CD4-positive, alpha-beta memory T cell (primary cell): ENCODE measurements at regions of chr16 and their contacts with region 1.

Region 1: DNA sequence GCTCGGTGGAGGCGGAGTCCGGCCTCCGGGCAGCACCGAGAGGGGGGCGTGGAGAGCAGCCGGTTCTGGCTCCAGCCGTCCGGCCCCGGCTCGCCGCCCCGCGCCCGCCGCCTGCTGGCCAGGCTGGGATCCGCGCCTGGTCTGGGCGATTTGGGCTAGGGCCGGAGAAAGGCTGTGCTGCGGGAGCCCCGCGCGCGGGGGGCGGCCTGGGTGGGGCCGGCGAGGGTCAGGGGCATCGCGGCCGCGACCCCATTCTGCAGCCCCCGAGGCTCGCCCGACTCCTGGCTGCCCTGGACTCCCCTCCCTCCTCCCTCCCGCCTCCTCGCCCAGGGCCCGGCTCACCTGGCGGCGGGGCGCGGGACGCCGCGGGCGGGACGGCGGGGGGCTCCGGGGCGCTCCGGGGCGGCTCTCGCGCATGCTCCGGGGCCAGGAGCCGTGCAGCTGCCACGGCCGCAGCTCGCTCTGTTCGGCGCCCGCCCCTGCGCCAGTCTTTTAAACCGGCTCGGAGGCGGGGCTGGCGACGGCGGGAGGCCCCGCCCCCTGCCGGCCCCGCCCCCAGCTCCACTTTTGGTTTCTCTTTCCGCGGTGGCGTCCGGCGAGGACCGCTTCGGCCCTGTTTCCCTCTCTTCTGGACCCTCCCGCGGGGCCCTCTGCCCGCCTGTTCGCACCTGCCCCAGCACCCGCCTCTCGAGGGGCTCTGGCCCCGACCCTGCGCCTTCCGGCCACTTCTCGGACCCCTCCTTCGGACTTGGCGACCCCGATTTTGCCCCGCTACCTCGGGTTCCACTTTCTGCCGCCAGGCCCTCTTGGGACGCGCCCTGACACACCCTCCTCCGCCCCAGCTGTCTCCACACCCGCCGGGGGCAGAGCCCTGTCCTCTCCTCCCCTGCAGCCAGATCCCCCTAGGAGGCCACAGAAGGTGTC is at the start of gene SOCS1:
- DNase-seq: peak; percentile 78 to 87 (median 83)
- H3K4me3 ChIP-seq: peak within 1 kb of the TSS; percentile 73 to 85
- H3K4me3 Mint-ChIP-seq: peak within 1 kb of the TSS; percentile 90 to 98 (median 94)
- H3K27ac ChIP-seq: peak within 1 kb of the TSS; percentile 83
- H3K27ac Mint-ChIP-seq: peak within 1 kb of the TSS; percentile 92 to 99 (median 97)
- H3K4me1 ChIP-seq: peaks cover 60% of the 10 kb centered on the region
- H3K4me1 Mint-ChIP-seq: peaks cover 38 to 77% (median 48%) of the 10 kb centered on the region in 4 donors
- H3K27me3 ChIP-seq: no peaks in the 10 kb centered on the region
- H3K27me3 Mint-ChIP-seq: no peaks in the 10 kb centered on the region
- total RNA-seq, gene SOCS1: 14.7 to 16.7 TPM

Region 2: GRCh38 chr16:10949370-10949970 is 306.5 kb before region 1 on chr16:
- CTCF ChIA-PET with region 1: interaction called, 8 read pairs
- POLR2A ChIA-PET with region 1: interaction called, 17 read pairs
- intact Hi-C with region 1: loop called (anchors 1 kb)
- DNase-seq: peak; percentile 34 to 75 (median 53)
- H3K4me3 ChIP-seq: no peak overlapping the region
- H3K4me3 Mint-ChIP-seq: peak overlapping the region in 6 of 8 donors; percentile 6 to 64 (median 52)
- H3K27ac ChIP-seq: no peak overlapping the region
- H3K27ac Mint-ChIP-seq: peak overlapping the region; percentile 32 to 95 (median 86)
- H3K4me1 ChIP-seq: peaks cover 50% of the 10 kb centered on the region
- H3K4me1 Mint-ChIP-seq: peaks cover 32 to 66% (median 49%) of the 10 kb centered on the region in 4 donors
- H3K27me3 ChIP-seq: no peaks in the 10 kb centered on the region
- H3K27me3 Mint-ChIP-seq: no peaks in the 10 kb centered on the region

Region 3: DNA sequence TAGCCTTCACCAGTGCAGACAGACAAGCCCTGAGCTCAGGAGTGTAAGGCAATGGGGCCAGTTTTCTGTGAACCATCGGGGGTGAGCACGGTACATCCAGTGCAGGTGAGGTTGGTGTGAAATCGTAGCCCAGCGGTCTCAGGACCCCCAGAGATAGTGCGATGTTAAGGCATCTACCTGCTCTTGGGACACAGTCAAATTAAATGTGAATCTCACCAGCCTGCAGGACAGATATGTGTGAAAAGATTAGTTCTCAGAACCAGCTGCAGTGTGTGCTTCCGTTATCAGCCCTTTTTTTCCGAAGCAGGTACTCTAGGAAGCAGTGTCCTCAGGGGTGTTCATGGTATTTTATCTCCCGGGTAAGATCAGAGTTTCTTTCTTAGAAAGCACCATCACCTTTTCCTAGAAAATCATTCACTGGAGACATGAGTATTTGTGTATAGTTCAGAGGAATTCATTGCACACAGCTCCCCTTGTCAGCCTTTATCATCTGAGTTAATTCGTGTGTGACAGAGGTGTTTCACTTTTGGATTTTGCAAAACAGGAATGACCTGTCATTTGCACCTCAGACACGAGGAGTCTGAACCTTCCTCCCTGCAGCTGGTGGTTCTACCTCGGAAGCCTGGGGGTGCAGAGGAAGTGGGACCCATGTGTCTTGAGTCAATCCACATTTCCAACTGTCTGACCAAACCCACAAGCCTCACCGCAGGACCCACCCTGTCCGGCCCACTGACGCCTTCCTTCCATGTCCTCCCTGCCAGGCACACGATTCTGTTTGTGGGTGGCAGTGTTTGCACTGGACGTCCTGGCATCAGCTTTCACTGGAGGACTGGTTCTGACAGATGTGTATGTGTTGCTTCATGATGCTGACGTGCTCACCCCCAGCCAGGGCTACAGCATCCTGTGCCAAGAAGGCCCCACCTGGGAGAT is 203.9 kb before region 1 on chr16:
- CTCF ChIA-PET with region 1: interaction called, 9 read pairs
- POLR2A ChIA-PET with region 1: interaction called, 21 read pairs
- intact Hi-C with region 1: loop called (anchors 2 kb)
- DNase-seq: peak in 4 of 5 donors; percentile 9 to 47 (median 15)
- H3K4me3 ChIP-seq: peak overlapping the region in 1 of 2 donors; percentile 25
- H3K4me3 Mint-ChIP-seq: peak overlapping the region in 7 of 8 donors; percentile 53 to 80 (median 70)
- H3K27ac ChIP-seq: no peak overlapping the region
- H3K27ac Mint-ChIP-seq: peak overlapping the region; percentile 37 to 92 (median 79)
- H3K4me1 ChIP-seq: peaks cover 33% of the 10 kb centered on the region
- H3K4me1 Mint-ChIP-seq: peaks cover 26 to 44% (median 32%) of the 10 kb centered on the region in 4 donors
- H3K27me3 ChIP-seq: no peaks in the 10 kb centered on the region
- H3K27me3 Mint-ChIP-seq: no peaks in the 10 kb centered on the region

Region 4: DNA sequence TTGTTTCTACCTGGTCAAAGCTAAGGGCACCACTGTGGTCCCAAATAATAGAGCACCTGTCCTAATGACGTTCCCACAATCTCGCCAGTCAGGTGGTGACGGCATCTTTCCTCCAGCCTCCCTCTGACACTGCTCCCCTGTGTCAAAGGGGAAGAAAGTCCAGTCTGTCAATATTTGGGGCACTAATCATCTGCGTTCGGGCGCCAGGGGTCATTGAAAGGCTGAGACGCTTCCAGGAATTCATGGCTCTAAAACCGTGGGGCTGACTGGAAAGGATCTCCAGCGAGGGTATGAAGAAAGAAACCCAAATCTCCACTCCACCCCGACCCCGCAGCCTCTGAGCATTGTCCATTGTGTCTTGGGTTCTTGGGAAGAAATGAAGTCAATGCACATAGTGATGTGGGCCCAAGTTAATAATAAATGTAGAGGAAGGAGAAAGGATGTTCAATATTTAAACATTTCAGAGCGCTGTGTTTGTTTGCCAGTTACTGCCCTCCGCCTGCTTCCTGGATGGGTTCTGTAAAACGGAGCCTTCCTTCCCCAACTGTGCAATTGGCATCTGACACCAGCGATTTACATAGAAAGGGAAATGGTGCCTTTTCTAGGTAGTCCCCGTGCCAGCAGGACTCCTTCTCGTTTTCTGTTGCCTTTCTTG is 103.2 kb before region 1 on chr16:
- CTCF ChIA-PET with region 1: no interaction called
- POLR2A ChIA-PET with region 1: no interaction called
- intact Hi-C with region 1: no loop called
- DNase-seq: no peak
- H3K4me3 ChIP-seq: no peak overlapping the region
- H3K4me3 Mint-ChIP-seq: no peak overlapping the region
- H3K27ac ChIP-seq: no peak overlapping the region
- H3K27ac Mint-ChIP-seq: peak overlapping the region in 1 of 7 donors; percentile 24
- H3K4me1 ChIP-seq: no peaks in the 10 kb centered on the region
- H3K4me1 Mint-ChIP-seq: peaks cover 0 to 3% (median 2%) of the 10 kb centered on the region in 4 donors
- H3K27me3 ChIP-seq: no peaks in the 10 kb centered on the region
- H3K27me3 Mint-ChIP-seq: no peaks in the 10 kb centered on the region

Region 5: GRCh38 chr16:11218604-11218962 is 37.4 kb before region 1 on chr16:
- CTCF ChIA-PET with region 1: interaction called, 69 read pairs
- POLR2A ChIA-PET with region 1: interaction called, 283 read pairs
- intact Hi-C with region 1: no loop called
- DNase-seq: no peak
- H3K4me3 ChIP-seq: no peak overlapping the region
- H3K4me3 Mint-ChIP-seq: no peak overlapping the region
- H3K27ac ChIP-seq: no peak overlapping the region
- H3K27ac Mint-ChIP-seq: peak overlapping the region in 1 of 7 donors; percentile 64
- H3K4me1 ChIP-seq: peaks cover 14% of the 10 kb centered on the region
- H3K4me1 Mint-ChIP-seq: peaks cover 8 to 25% (median 17%) of the 10 kb centered on the region in 4 donors
- H3K27me3 ChIP-seq: no peaks in the 10 kb centered on the region
- H3K27me3 Mint-ChIP-seq: no peaks in the 10 kb centered on the region

Region 6: GRCh38 chr16:11245988-11246387 is 10.0 kb before region 1 on chr16:
- CTCF ChIA-PET with region 1: interaction called, 17 read pairs
- POLR2A ChIA-PET with region 1: interaction called, 20 read pairs
- intact Hi-C with region 1: no loop called
- DNase-seq: no peak
- H3K4me3 ChIP-seq: no peak overlapping the region
- H3K4me3 Mint-ChIP-seq: no peak overlapping the region
- H3K27ac ChIP-seq: no peak overlapping the region
- H3K27ac Mint-ChIP-seq: no peak overlapping the region
- H3K4me1 ChIP-seq: peaks cover 7% of the 10 kb centered on the region
- H3K4me1 Mint-ChIP-seq: peaks cover 5 to 22% (median 7%) of the 10 kb centered on the region in 4 donors
- H3K27me3 ChIP-seq: no peaks in the 10 kb centered on the region
- H3K27me3 Mint-ChIP-seq: no peaks in the 10 kb centered on the region

Region 7: GRCh38 chr16:11345040-11345862 is 89.3 kb after region 1 on chr16 and contains the start of gene RMI2:
- CTCF ChIA-PET with region 1: interaction called, 5 read pairs
- POLR2A ChIA-PET with region 1: interaction called, 5 read pairs
- intact Hi-C with region 1: loop called (anchors 1 kb)
- DNase-seq: peak; percentile 93 to 97 (median 95)
- H3K4me3 ChIP-seq: peak within 1 kb of the TSS; percentile 49 to 84
- H3K4me3 Mint-ChIP-seq: peak within 1 kb of the TSS; percentile 83 to 91 (median 89)
- H3K27ac ChIP-seq: no peak within 1 kb of the TSS
- H3K27ac Mint-ChIP-seq: peak within 1 kb of the TSS; percentile 12 to 89 (median 78)
- H3K4me1 ChIP-seq: peaks cover 11% of the 10 kb centered on the region
- H3K4me1 Mint-ChIP-seq: peaks cover 5 to 10% (median 7%) of the 10 kb centered on the region in 4 donors
- H3K27me3 ChIP-seq: no peaks in the 10 kb centered on the region
- H3K27me3 Mint-ChIP-seq: no peaks in the 10 kb centered on the region
- total RNA-seq, gene RMI2: 1.5 to 1.8 TPM